ENCODE measurements at regions of chr12 and their contacts with region 1.

Region 1: DNA sequence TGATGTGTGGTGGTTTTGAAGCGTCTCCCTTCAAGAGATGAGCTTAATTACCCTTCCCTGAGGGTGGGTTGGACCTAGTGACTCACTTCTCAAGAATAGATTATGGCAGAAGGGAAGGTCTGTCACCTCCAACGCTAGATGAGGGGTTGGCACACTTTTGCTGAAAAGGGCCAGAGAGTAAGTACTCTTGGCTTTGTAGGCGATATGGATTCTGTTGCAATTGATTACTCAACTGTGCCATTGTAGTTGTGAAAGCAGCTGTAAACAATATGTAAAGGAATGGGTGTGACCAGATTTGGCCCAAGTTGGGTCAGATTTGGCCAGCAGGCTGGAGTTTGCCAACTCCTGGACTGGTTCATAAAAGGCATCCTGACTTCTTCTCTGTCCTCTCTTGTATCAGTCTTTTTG is 53.3 kb downstream of the SMIM41 start:
- DNase-seq: no peak
- ATAC-seq: no peak
- H3K4me3 Mint-ChIP-seq: no peak overlapping the region
- H3K27ac Mint-ChIP-seq: no peak overlapping the region
- H3K4me1 Mint-ChIP-seq: no peaks in the 10 kb centered on the region
- H3K27me3 Mint-ChIP-seq: peaks cover 14% of the 10 kb centered on the region

Region 2: GRCh38 chr12:52121824-52122539 is 10.8 kb before region 1 on chr12:
- CTCF ChIA-PET with region 1: interaction called, 11 read pairs
- POLR2A ChIA-PET with region 1: no interaction called
- DNase-seq: peak; percentile 79
- ATAC-seq: no peak
- H3K4me3 Mint-ChIP-seq: no peak overlapping the region
- H3K27ac Mint-ChIP-seq: no peak overlapping the region
- H3K4me1 Mint-ChIP-seq: peaks cover 26% of the 10 kb centered on the region
- H3K27me3 Mint-ChIP-seq: peaks cover 12% of the 10 kb centered on the region